ENCODE measurements at regions of chr12 and their contacts with region 1.

Region 1: DNA sequence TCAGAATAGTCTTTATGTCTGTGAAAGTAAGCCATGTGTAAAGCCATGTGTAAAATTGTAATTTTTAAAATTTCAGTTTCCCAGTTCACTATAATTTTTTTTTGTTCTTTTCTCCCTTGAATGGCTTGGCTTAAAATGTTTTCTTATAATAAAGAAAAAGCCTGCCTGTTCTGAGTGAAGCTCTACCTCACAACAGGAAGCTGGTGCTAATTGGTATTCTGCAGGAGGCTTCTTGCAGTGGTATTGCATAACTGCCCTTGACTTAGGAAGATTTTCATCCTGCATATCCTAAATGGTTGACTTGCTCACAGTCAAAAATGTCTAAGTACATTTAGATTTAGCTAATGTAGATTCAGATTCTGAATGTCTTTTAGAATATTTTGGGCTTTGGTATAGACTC is 49.5 kb downstream of the ATP2A2 start:
- DNase-seq: no peak
- H3K4me3 ChIP-seq: no peak overlapping the region
- H3K27ac ChIP-seq: no peak overlapping the region
- H3K4me1 ChIP-seq: no peaks in the 10 kb centered on the region
- H3K27me3 ChIP-seq: no peaks in the 10 kb centered on the region
- CTCF ChIP-seq: no peak
- EP300 ChIP-seq: no peak
- POLR2A ChIP-seq: no peak
- RAD21 ChIP-seq: no peak

Region 2: DNA sequence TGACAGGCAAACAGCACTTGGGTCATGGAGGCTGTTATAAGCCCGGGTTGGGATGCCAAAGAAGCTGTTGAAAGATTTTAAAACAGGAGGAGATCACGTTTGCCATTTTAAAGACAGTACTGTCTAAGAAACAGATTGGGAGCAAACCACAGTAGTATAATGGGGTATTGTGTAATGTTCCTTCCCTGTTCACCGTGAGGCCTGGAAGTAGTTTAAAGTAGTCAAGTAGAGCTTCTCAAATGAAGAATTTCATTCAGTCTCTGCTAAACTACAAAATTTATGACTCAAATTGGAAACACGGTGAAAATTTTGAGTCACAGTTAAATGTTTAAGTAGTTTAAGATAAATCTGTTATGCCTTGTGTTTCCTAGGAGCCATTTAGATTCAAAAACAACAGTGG is 13.7 kb before region 1 on chr12:
- CTCF ChIA-PET with region 1: interaction called, 6 read pairs
- POLR2A ChIA-PET with region 1: interaction called, 12 read pairs
- DNase-seq: no peak
- H3K4me3 ChIP-seq: no peak overlapping the region
- H3K27ac ChIP-seq: no peak overlapping the region
- H3K4me1 ChIP-seq: no peaks in the 10 kb centered on the region
- H3K27me3 ChIP-seq: no peaks in the 10 kb centered on the region
- CTCF ChIP-seq: no peak
- EP300 ChIP-seq: no peak
- POLR2A ChIP-seq: no peak
- RAD21 ChIP-seq: no peak

Region 3: DNA sequence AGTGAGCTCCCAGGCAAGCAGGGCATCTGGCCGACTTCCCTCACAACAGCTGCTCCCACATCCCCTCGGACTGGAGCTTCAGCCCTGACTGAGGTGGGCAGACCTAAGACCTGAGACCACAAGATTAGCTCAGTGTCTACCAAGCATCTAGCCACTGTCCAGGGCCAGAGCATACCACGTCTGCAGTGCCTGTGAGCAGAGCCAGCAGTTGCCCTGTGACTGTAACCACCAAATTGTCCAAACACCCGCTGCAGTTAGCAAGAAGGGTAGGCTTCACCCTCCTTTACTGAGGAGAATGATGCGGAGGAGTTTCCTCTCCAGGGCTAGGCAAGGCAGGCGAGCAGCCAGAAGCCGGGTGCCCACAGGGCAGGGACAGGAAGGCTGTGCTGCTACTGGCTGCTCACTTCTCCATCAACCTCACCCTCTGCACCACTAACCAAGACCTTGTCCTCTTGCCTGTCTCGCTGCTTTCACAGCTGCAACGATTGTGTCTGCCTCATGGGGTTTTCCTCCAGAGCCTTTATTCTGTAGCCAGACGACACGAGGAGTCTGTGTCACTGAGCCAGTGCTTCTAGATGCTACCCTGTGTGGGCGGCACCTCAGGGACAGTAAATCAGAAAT is 19.1 kb after region 1 on chr12:
- CTCF ChIA-PET with region 1: interaction called, 6 read pairs
- POLR2A ChIA-PET with region 1: interaction called, 11 read pairs
- DNase-seq: no peak
- H3K4me3 ChIP-seq: no peak overlapping the region
- H3K27ac ChIP-seq: no peak overlapping the region
- H3K4me1 ChIP-seq: no peaks in the 10 kb centered on the region; a peak in 2 of 7 replicates
- H3K27me3 ChIP-seq: no peaks in the 10 kb centered on the region
- CTCF ChIP-seq: no peak
- EP300 ChIP-seq: no peak
- POLR2A ChIP-seq: peak; percentile 38 to 53; a peak in 2 of 3 replicates
- RAD21 ChIP-seq: no peak

Region 4: DNA sequence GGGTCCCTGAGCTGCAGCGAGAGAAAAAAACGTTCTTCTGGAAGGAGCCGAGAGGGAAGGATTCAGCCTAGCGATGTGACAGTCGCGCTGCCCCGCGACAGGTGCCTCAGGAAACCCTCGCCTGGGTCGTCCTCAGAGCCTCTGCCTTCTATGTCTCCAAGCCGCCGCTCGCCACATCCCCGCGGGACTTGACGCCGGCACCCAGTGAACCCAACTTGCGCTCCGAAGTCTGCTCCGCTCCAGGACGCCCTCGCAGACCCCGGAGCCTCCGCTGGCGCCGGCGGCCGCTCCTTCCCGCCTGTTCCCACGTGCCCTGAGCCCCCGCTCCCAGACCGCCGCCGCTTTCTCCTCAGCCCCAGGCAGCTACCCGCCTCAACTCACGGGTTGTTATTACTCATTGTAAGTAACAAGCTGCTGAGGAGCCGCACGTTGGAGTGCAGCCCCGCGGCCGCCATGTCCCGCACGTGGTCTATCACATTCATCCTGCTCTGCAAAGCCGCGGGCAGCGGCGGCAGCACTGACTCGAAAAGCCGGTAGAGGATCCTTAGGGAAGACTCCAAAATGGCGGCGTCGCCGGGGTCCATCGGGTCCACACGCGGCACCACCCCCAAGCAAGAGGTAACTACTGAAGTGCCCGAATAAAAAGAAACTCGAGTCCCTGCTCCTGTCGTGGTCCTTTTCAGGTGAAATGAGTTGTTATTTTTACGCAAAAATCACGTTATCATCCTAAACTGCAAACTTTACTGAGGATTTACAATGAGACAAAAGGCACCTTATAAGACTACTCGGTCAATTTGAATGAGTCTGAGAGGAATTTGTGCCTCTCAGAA is 72.8 kb after region 1 on chr12 and contains the start of gene ANAPC7:
- CTCF ChIA-PET with region 1: no interaction called
- POLR2A ChIA-PET with region 1: no interaction called
- DNase-seq: peak; percentile 77 to 90
- H3K4me3 ChIP-seq: peak within 1 kb of the TSS; percentile 69 to 96 (median 91)
- H3K27ac ChIP-seq: peak within 1 kb of the TSS; percentile 99
- H3K4me1 ChIP-seq: peaks cover 0 to 4% (median 0%) of the 10 kb centered on the region in 4 experiments; a peak in 1 of 7 replicates
- H3K27me3 ChIP-seq: no peaks in the 10 kb centered on the region
- CTCF ChIP-seq: no peak
- EP300 ChIP-seq: no peak
- POLR2A ChIP-seq: peak; percentile 78 to 96
- RAD21 ChIP-seq: peak; percentile 2 to 31; a peak in 2 of 4 replicates
- total RNA-seq, gene ANAPC7: 81.2 and 105 TPM in 2 replicates

Measured in H1 (cell line).